ENCODE measurements at regions of chr2 and their contacts with region 1.

Region 1: GRCh38 chr2:196322973-196323810 is 151.8 kb upstream of the STK17B start:
- DNase-seq: no peak
- H3K4me3 ChIP-seq: no peak overlapping the region
- H3K4me3 Mint-ChIP-seq: no peak overlapping the region
- H3K27ac ChIP-seq: no peak overlapping the region
- H3K27ac Mint-ChIP-seq: no peak overlapping the region
- H3K4me1 ChIP-seq: no peaks in the 10 kb centered on the region
- H3K4me1 Mint-ChIP-seq: no peaks in the 10 kb centered on the region
- H3K27me3 ChIP-seq: no peaks in the 10 kb centered on the region
- H3K27me3 Mint-ChIP-seq: peaks cover 3 to 4% of the 10 kb centered on the region in 2 donors

Region 2: GRCh38 chr2:196337208-196337953 is 14.2 kb after region 1 on chr2:
- CTCF ChIA-PET with region 1: interaction called, 11 read pairs
- POLR2A ChIA-PET with region 1: no interaction called
- DNase-seq: peak in 2 of 5 donors; percentile 2 to 23
- H3K4me3 ChIP-seq: no peak overlapping the region
- H3K4me3 Mint-ChIP-seq: no peak overlapping the region
- H3K27ac ChIP-seq: no peak overlapping the region
- H3K27ac Mint-ChIP-seq: peak overlapping the region in 1 of 8 donors; percentile 34
- H3K4me1 ChIP-seq: no peaks in the 10 kb centered on the region
- H3K4me1 Mint-ChIP-seq: peaks cover 0 to 4% (median 0%) of the 10 kb centered on the region in 3 donors
- H3K27me3 ChIP-seq: no peaks in the 10 kb centered on the region
- H3K27me3 Mint-ChIP-seq: peaks cover 3 to 14% of the 10 kb centered on the region in 2 donors

Region 3: DNA sequence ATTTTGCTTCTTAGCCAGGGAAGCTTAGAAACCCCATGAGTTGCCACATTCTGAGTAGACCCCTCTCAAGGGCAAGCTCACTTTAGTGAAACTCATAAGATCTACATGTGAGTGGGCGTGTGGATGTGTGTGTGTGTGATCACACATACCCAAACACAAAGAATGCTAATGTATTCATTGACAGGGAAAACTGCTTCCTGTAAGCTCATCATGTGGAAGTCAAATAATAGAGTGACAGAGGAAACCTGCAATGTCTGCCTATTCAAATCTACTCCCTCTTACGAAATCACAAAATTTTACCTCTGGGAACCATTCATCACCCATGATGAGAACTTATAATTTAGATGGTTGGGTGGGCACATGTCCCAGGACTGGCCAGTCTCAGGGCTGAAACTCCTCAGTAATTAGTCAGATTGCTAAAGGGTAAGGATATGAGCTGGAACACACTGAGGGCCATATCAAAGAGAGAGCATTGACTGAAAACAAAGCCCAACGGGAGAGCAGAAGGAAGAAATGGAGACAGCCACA is 221.8 kb after region 1 on chr2:
- CTCF ChIA-PET with region 1: no interaction called
- POLR2A ChIA-PET with region 1: no interaction called
- DNase-seq: no peak
- H3K4me3 ChIP-seq: no peak overlapping the region
- H3K4me3 Mint-ChIP-seq: no peak overlapping the region
- H3K27ac ChIP-seq: no peak overlapping the region
- H3K27ac Mint-ChIP-seq: no peak overlapping the region
- H3K4me1 ChIP-seq: no peaks in the 10 kb centered on the region
- H3K4me1 Mint-ChIP-seq: no peaks in the 10 kb centered on the region
- H3K27me3 ChIP-seq: no peaks in the 10 kb centered on the region
- H3K27me3 Mint-ChIP-seq: peaks cover 5 to 32% of the 10 kb centered on the region in 2 donors

Region 4: DNA sequence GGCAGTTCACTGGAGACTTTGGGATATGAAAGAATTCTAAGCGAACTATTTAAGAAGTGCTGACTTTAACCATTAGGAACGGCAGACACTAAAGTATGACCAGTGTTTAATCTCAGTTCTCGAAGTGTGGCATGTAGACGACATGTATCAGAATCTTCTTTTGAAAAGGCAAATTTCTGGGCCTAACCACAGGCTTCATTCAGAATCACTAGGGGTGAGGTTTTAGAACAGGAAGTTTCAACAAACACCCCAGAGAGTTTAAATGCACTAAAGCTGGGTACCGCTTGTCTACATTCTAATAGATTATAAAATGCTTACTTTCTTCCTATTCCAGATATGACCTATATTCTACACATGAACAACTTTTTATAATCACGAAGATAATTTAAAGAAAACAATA is 807.1 kb after region 1 on chr2:
- CTCF ChIA-PET with region 1: no interaction called
- POLR2A ChIA-PET with region 1: no interaction called
- DNase-seq: peak in 2 of 5 donors; percentile 24 to 62
- H3K4me3 ChIP-seq: no peak overlapping the region
- H3K4me3 Mint-ChIP-seq: peak overlapping the region in 6 of 7 donors; percentile 20 to 52 (median 32)
- H3K27ac ChIP-seq: no peak overlapping the region
- H3K27ac Mint-ChIP-seq: peak overlapping the region; percentile 35 to 89 (median 77)
- H3K4me1 ChIP-seq: peaks cover 66% of the 10 kb centered on the region
- H3K4me1 Mint-ChIP-seq: peaks cover 61 to 88% (median 86%) of the 10 kb centered on the region in 3 donors
- H3K27me3 ChIP-seq: no peaks in the 10 kb centered on the region
- H3K27me3 Mint-ChIP-seq: no peaks in the 10 kb centered on the region